Heart right ventricle (tissue), 16 donors: ENCODE measurements at regions of chr7 and their contacts with region 1.

Region 1: GRCh38 chr7:7190142-7190541 is 7.8 kb downstream of the C1GALT1 start:
- DNase-seq: no peak
- ATAC-seq: no peak
- H3K4me3 ChIP-seq: no peak overlapping the region
- H3K27ac ChIP-seq: no peak overlapping the region
- H3K4me1 ChIP-seq: peaks cover 0 to 56% (median 15%) of the 10 kb centered on the region in 9 donors
- H3K27me3 ChIP-seq: no peaks in the 10 kb centered on the region
- CTCF ChIP-seq: no peak

Region 2: DNA sequence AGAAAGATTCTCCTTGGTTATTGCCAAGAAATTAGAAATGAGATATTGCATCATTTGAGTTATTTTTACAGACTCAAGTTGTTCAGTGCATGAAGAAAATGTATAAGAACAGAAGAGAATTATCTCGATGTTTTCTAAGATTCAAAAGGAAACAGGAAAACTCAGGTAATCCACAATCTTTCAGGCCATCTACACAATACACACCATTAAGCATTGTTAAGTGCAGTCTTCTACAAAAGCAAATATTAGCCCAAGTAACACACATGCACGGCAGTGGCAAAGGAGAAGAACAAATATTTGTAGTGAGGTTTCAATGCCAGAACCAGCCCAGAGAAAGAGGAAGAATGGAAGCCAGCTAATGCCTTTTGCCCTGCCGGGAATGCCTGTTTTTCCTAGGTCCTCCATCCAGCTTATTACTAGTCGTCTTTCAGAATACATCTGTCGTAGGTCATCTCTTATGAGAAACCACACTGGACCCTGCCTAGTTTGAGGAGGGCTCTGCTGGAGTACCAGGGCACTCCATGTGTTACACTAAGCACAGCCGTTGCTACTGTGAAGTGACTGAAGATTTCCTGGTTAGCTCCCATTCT is 75.3 kb before region 1 on chr7:
- intact Hi-C with region 1: no loop called
- DNase-seq: no peak
- ATAC-seq: no peak
- H3K4me3 ChIP-seq: no peak overlapping the region
- H3K27ac ChIP-seq: no peak overlapping the region
- H3K4me1 ChIP-seq: no peaks in the 10 kb centered on the region
- H3K27me3 ChIP-seq: no peaks in the 10 kb centered on the region
- CTCF ChIP-seq: no peak

Region 3: DNA sequence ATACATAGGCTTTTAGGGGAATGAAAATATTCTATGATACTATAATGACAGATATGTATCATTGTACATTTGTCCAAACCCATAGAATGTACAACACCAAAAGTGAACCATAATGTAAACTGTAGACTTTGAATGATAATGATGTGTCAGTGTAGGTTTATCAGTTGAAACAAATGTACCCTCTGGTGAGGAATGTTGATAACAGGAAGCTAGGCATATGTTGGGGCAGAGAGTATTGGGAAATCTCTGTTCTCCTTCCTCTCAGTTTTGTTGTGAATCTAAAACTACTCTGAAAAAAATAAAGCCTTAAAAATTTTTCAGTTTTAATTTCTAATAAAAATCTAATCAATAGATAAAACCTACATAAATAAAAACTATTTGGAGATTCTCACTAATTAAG is 29.1 kb after region 1 on chr7:
- intact Hi-C with region 1: loop called in 1 of 10 experiments (anchors 2 kb)
- DNase-seq: no peak
- ATAC-seq: no peak
- H3K4me3 ChIP-seq: no peak overlapping the region
- H3K27ac ChIP-seq: no peak overlapping the region
- H3K4me1 ChIP-seq: peaks cover 0 to 21% (median 10%) of the 10 kb centered on the region in 9 donors
- H3K27me3 ChIP-seq: no peaks in the 10 kb centered on the region
- CTCF ChIP-seq: no peak

Region 4: GRCh38 chr7:7251742-7252141 is 61.6 kb after region 1 on chr7:
- intact Hi-C with region 1: loop called in 2 of 10 experiments (anchors 5 kb)
- DNase-seq: no peak
- ATAC-seq: peak in 4 of 8 donors; percentile 28 to 59 (median 46)
- H3K4me3 ChIP-seq: no peak overlapping the region
- H3K27ac ChIP-seq: no peak overlapping the region
- H3K4me1 ChIP-seq: peaks cover 0 to 28% (median 0%) of the 10 kb centered on the region in 9 donors
- H3K27me3 ChIP-seq: no peaks in the 10 kb centered on the region
- CTCF ChIP-seq: no peak